ENCODE measurements at regions of chr3 and their contacts with region 1.

Region 1: GRCh38 chr3:57227204-57227929 is at the start of gene APPL1:
- DNase-seq: peak; percentile 90
- ATAC-seq: peak; percentile 97
- H3K4me3 Mint-ChIP-seq: peak within 1 kb of the TSS; percentile 86
- H3K27ac Mint-ChIP-seq: peak within 1 kb of the TSS; percentile 80
- H3K4me1 Mint-ChIP-seq: peaks cover 33% of the 10 kb centered on the region
- H3K27me3 Mint-ChIP-seq: no peaks in the 10 kb centered on the region
- total RNA-seq, gene APPL1: 36.6 to 37.3 TPM

Region 2: DNA sequence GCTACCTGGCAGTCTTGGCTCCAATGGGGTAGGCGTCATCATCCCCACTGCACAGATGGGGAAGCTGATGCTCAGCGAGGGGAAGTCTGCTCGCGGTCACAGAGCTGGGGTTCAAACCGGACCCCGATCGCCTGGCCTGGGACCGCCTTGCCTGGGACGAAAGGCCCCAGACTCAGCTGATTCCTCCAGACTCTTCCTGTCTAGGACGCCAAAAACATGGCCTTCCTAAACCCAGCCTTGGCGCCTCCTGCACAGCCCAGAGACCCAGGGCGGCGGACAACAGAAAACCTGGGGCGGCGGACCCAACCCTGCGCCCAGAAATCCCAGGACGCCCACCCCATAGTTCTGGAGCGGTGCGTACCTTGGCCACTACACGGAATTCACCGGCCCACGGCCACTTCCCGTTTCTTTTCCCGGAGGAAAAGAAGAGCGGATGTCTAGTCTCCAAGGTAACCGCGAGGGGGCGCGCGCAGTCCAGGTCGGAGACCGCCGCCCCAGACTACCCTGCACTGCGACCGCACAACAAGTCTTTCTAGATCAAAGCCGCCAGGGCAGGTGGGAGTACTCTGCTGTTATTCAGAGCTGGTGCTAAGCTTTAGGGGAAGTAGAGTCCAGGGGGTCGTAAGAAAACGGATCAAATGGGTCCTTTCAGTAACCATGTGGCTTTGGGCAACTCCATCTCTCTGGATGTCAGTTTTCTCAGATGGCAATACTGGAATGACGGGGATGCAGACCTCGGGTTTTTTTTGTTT is 57.3 kb before region 1 on chr3:
- CTCF ChIA-PET with region 1: interaction called, 22 read pairs
- POLR2A ChIA-PET with region 1: no interaction called
- DNase-seq: peak; percentile 74
- ATAC-seq: peak; percentile 87
- H3K4me3 Mint-ChIP-seq: peak overlapping the region; percentile 61
- H3K27ac Mint-ChIP-seq: no peak overlapping the region
- H3K4me1 Mint-ChIP-seq: peaks cover 4% of the 10 kb centered on the region
- H3K27me3 Mint-ChIP-seq: peaks cover 53% of the 10 kb centered on the region